ENCODE measurements at regions of chr5 and their contacts with region 1.

Region 1: DNA sequence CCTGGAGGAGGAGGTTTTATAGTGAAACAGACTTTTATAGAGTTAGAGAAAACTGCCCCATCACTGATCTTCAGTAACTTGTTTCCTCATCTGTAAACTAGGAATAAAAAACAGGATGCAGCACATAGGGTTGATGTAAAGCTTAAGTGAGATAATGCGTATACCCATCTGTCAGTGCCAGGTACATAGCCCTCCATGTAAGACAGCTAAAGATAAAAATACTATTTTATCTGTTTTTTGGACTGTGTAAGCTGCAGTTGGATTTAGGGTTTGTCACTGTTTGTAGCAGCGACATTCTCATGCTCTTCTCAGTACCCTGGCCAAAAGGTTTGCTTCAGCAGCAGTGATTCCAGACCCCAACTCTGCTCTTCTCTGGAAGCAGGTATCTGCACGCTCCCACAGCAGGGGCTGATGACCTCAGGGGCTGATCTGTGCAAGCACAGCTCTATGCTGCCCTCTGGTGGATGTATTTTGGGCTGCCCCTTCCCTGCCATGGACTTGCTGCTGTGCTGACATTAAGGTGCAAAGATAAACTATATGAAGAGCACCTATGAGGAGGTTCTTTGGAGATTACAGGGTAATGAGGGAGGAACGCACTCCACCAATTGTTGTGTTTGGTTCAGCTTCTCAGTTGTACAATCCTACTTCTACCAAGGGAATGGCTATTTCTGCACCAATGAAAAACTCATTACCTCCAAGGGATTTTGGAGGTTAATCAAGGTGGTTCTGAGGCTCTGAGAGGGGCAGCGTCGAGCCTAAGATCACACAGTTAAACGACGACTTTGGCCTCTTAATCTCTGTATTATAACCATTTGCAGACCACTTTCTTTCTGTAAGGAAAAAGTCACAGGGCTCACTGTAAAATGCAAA is 13.1 kb downstream of the HMHB1 start:
- DNase-seq: peak; percentile 84 to 89 (median 85)
- H3K4me3 ChIP-seq: no peak overlapping the region
- H3K27ac ChIP-seq: no peak overlapping the region
- H3K4me1 ChIP-seq: peaks cover 0 to 14% (median 2%) of the 10 kb centered on the region in 4 experiments
- H3K27me3 ChIP-seq: no peaks in the 10 kb centered on the region

Region 2: GRCh38 chr5:143403593-143404415 is 421.3 kb before region 1 on chr5 and contains the start of gene NR3C1:
- CTCF ChIA-PET with region 1: interaction called, 18 read pairs
- POLR2A ChIA-PET with region 1: no interaction called
- DNase-seq: peak; percentile 92 to 94 (median 94)
- H3K4me3 ChIP-seq: peak within 1 kb of the TSS; percentile 89 to 97 (median 92)
- H3K27ac ChIP-seq: peak within 1 kb of the TSS; percentile 96 to 98
- H3K4me1 ChIP-seq: peaks cover 23 to 45% (median 35%) of the 10 kb centered on the region in 4 experiments
- H3K27me3 ChIP-seq: no peaks in the 10 kb centered on the region

Region 3: DNA sequence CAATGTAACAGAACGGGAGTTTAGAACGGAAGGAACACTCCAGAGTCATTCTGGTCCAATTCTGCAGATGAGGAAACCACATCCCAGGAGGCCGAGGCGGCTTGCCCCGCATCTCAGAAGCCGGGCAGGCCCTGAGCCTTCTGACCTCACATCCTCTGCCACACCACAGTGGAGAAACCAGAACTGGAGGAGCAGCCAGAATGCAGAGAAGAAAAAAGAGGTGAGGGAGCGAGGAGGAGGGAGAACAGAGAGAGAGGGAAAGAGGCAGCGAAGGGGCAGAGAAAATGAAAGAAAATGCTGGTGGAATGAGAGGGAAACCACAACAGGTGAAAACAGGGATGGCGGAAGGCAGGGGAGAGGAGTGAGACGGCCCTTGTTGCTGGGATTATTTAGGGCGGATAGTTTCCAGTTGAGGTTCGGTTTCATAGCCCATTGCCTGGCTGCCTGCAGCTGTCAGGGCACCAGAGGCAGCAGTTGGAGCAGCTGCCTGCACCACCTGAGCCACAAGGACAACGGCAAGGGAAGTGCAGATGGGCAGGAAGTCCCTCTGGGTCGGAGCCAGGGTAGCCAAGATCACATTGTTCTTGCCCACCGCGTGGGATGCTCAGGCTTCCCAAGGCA is 12.9 kb before region 1 on chr5 and contains the start of gene HMHB1:
- CTCF ChIA-PET with region 1: interaction called, 16 read pairs
- POLR2A ChIA-PET with region 1: no interaction called
- DNase-seq: peak in 2 of 3 donors; percentile 62 to 67
- H3K4me3 ChIP-seq: peak within 1 kb of the TSS in 1 of 7 experiments; percentile 11
- H3K27ac ChIP-seq: no peak within 1 kb of the TSS
- H3K4me1 ChIP-seq: peaks cover 0 to 9% (median 8%) of the 10 kb centered on the region in 4 experiments
- H3K27me3 ChIP-seq: no peaks in the 10 kb centered on the region

Region 4: GRCh38 chr5:143931476-143931875 is 106.4 kb after region 1 on chr5:
- CTCF ChIA-PET with region 1: no interaction called
- POLR2A ChIA-PET with region 1: no interaction called
- DNase-seq: no peak
- H3K4me3 ChIP-seq: no peak overlapping the region
- H3K27ac ChIP-seq: no peak overlapping the region
- H3K4me1 ChIP-seq: no peaks in the 10 kb centered on the region
- H3K27me3 ChIP-seq: no peaks in the 10 kb centered on the region

Measured in common myeloid progenitor, CD34-positive (primary cell).